Mucosa of descending colon (tissue), 3 donors: ENCODE measurements at regions of chr17 and their contacts with region 1.

Region 1: GRCh38 chr17:36475346-36475970 is 11.0 kb upstream of the ZNHIT3 start:
- DNase-seq: no peak
- ATAC-seq: no peak
- H3K4me3 ChIP-seq: no peak overlapping the region
- H3K4me1 ChIP-seq: no peaks in the 10 kb centered on the region
- CTCF ChIP-seq: no peak

Region 2: DNA sequence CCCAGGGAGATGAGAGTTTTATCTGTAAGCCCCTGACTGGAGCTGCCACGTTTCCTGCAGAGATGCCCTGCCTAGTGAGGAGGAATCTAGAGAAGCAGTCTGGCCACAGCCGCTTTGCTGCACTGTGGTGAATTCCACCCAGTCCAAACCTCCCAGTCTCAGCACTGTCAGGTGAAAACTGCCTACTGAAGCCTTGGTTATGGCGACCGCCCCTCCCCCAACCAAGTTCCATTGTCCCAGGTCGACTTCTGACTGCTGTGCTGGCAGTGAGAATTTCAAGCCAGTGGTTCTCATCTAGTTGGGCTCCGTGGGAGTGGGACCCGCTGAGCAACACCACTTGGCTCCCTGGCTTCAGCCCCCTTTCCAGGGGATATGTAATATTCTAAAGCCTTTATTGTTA is 521.7 kb before region 1 on chr17:
- intact Hi-C with region 1: loop called in 1 of 2 experiments (anchors 10 kb)
- DNase-seq: no peak
- ATAC-seq: no peak
- H3K4me3 ChIP-seq: no peak overlapping the region
- H3K4me1 ChIP-seq: no peaks in the 10 kb centered on the region
- CTCF ChIP-seq: no peak

Region 3: DNA sequence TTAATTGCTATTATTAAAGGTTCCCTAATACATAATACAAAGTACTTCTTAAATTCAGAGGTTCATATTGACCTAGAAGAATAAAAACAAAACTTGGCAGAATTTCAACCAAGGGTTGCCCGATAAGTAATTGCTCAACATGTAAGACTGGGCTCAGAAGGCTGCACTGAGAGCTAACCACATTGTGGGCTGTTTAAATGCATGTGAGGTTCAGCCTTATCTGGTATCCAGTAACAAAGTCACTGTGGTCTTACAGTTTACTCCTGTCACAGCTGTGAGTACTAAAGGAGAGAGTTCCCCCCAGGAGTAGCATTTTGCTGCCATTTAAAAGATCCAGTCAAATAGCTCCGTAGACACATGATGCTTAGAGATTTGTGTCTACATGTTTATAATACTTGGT is 114.6 kb after region 1 on chr17:
- intact Hi-C with region 1: no loop called
- DNase-seq: no peak
- ATAC-seq: no peak
- H3K4me3 ChIP-seq: no peak overlapping the region
- H3K4me1 ChIP-seq: peaks cover 22% of the 10 kb centered on the region
- CTCF ChIP-seq: no peak